ENCODE measurements at regions of chr16 and their contacts with region 1.

Region 1: GRCh38 chr16:8878521-8878911 is 3.6 kb upstream of the LITAFD start:
- DNase-seq: no peak
- H3K4me3 ChIP-seq: no peak overlapping the region
- H3K27ac ChIP-seq: no peak overlapping the region
- H3K4me1 ChIP-seq: no peaks in the 10 kb centered on the region
- H3K27me3 ChIP-seq: peaks cover 0 to 2% of the 10 kb centered on the region in 2 experiments
- CTCF ChIP-seq: no peak
- POLR2A ChIP-seq: no peak

Region 2: GRCh38 chr16:8271344-8271743 is 607.2 kb before region 1 on chr16:
- CTCF ChIA-PET with region 1: no interaction called
- POLR2A ChIA-PET with region 1: no interaction called
- dilution Hi-C with region 1: no loop called
- intact Hi-C with region 1: no loop called
- DNase-seq: no peak
- H3K4me3 ChIP-seq: no peak overlapping the region
- H3K27ac ChIP-seq: no peak overlapping the region
- H3K4me1 ChIP-seq: no peaks in the 10 kb centered on the region
- H3K27me3 ChIP-seq: no peaks in the 10 kb centered on the region
- CTCF ChIP-seq: no peak
- POLR2A ChIP-seq: no peak

Region 3: GRCh38 chr16:8572919-8573724 is 305.4 kb before region 1 on chr16:
- CTCF ChIA-PET with region 1: interaction called, 10 read pairs
- POLR2A ChIA-PET with region 1: no interaction called
- dilution Hi-C with region 1: no loop called
- intact Hi-C with region 1: no loop called
- DNase-seq: no peak
- H3K4me3 ChIP-seq: no peak overlapping the region
- H3K27ac ChIP-seq: no peak overlapping the region
- H3K4me1 ChIP-seq: no peaks in the 10 kb centered on the region
- H3K27me3 ChIP-seq: peaks cover 2 to 3% of the 10 kb centered on the region in 2 experiments
- CTCF ChIP-seq: peak; percentile 14 to 27
- POLR2A ChIP-seq: no peak

Region 4: GRCh38 chr16:8660841-8661301 is 217.6 kb before region 1 on chr16:
- CTCF ChIA-PET with region 1: interaction called, 92 read pairs
- POLR2A ChIA-PET with region 1: no interaction called
- dilution Hi-C with region 1: no loop called
- intact Hi-C with region 1: loop called (anchors 1 kb)
- DNase-seq: peak; percentile 53
- H3K4me3 ChIP-seq: no peak overlapping the region
- H3K27ac ChIP-seq: no peak overlapping the region
- H3K4me1 ChIP-seq: no peaks in the 10 kb centered on the region
- H3K27me3 ChIP-seq: peaks cover 0 to 6% of the 10 kb centered on the region in 2 experiments
- CTCF ChIP-seq: peak; percentile 65 to 75
- POLR2A ChIP-seq: no peak

Region 5: GRCh38 chr16:8674413-8675022 is 204.0 kb before region 1 on chr16 and contains the start of gene ABAT:
- CTCF ChIA-PET with region 1: interaction called, 14 read pairs
- POLR2A ChIA-PET with region 1: no interaction called
- dilution Hi-C with region 1: no loop called
- intact Hi-C with region 1: no loop called
- DNase-seq: peak; percentile 77
- H3K4me3 ChIP-seq: peak within 1 kb of the TSS; percentile 39 to 51 (median 46)
- H3K27ac ChIP-seq: no peak within 1 kb of the TSS
- H3K4me1 ChIP-seq: peaks cover 6% of the 10 kb centered on the region
- H3K27me3 ChIP-seq: peaks cover 0 to 2% of the 10 kb centered on the region in 2 experiments
- CTCF ChIP-seq: no peak
- POLR2A ChIP-seq: no peak
- total RNA-seq, gene ABAT: 1.3 and 1.6 TPM in 2 replicates

Region 6: DNA sequence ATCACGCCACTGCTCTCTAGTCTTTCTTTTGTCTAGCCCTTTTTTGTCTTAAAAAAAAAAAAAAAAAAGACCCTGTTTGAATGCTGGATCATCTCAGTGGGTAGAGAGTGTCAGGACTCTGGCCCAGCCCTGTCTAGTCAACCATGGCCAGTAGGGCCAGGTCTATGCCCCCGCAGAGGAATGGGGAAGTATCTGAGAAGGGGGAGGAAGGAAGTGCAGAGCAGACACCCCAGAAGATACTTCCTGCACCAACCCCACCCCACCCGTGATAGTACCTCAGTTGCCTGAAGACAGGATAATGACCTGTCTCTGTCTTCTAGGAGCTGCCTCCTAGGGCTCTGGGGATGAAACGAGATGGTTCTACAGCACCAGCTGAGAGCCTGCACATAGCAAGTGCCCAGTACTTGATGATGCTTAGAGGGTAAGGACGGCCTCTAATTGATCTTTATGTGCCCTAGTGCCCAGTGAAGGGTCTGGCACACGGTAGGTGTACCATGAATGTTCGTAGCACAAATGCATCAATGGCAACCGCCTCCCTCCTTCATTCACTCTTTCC is 148.7 kb before region 1 on chr16:
- CTCF ChIA-PET with region 1: no interaction called
- POLR2A ChIA-PET with region 1: no interaction called
- dilution Hi-C with region 1: no loop called
- intact Hi-C with region 1: no loop called
- DNase-seq: no peak
- H3K4me3 ChIP-seq: no peak overlapping the region
- H3K27ac ChIP-seq: no peak overlapping the region
- H3K4me1 ChIP-seq: no peaks in the 10 kb centered on the region
- H3K27me3 ChIP-seq: no peaks in the 10 kb centered on the region
- CTCF ChIP-seq: no peak
- POLR2A ChIP-seq: no peak

Region 7: DNA sequence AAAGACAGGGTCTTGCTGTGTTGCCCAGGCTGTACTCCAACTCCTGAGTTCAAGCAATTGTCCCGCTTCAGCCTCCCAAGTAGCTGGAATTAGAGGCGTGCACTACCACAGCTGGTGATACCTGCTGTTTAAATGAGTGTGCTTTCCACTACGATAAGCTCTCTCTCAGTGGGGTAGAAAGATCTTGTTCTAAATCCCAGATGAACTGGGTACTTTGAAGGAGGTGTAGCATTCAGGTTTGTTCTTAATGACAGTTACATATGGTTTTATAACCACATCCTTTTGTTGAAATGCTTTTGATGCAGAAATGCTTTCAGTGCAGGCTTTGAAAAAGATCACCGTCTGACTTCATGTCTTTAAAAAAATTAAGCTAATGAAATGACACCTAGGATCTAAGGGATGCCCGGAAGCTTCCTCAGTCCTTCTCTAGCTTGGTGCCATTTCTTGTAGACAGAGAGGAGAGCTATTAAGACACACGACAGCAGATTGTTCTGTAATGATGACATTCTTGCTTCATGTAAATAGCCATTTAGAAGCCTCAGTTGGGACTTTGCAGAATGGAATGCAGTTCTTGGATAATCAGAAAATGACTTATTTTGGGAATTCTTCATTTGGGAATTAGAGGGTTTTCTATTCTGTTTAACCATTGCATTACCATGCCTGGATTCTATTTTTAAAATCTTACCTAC is 61.4 kb before region 1 on chr16:
- CTCF ChIA-PET with region 1: interaction called, 10 read pairs
- POLR2A ChIA-PET with region 1: no interaction called
- dilution Hi-C with region 1: no loop called
- intact Hi-C with region 1: no loop called
- DNase-seq: no peak
- H3K4me3 ChIP-seq: no peak overlapping the region
- H3K27ac ChIP-seq: no peak overlapping the region
- H3K4me1 ChIP-seq: no peaks in the 10 kb centered on the region
- H3K27me3 ChIP-seq: no peaks in the 10 kb centered on the region
- CTCF ChIP-seq: no peak
- POLR2A ChIP-seq: no peak

Region 8: DNA sequence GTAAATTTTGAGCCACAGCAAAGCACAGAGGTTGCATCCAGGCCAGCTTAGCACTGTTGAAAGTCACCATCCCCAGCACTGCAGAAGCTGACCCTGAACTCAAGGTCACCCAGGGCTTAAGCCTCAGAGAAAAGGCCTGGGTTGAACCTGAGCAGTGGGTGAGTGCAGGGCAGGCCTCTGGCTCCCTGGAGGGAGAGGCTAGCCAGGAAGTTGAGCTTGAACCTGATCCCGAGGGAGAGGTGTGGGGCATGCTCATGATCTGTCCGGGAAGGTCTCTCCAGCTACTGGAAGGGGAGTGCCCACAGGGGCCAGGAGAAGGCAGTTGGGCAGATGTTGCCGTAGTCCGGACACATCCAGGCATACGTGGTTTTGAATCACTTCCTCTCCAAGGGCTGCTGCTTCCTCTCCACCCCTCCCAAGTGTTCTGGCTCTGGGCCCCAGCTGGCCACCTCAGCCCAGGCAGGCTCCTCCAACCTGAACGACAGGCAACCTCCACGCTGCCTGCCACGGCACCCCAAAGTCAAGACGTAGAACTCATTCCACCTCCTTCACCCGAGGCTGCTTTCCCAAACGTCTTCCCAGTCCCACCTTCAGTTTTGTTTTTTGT is 28.1 kb before region 1 on chr16:
- CTCF ChIA-PET with region 1: interaction called, 13 read pairs
- POLR2A ChIA-PET with region 1: interaction called, 3 read pairs
- dilution Hi-C with region 1: no loop called
- intact Hi-C with region 1: no loop called
- DNase-seq: peak; percentile 87
- H3K4me3 ChIP-seq: no peak overlapping the region
- H3K27ac ChIP-seq: peak overlapping the region; percentile 27
- H3K4me1 ChIP-seq: peaks cover 23% of the 10 kb centered on the region
- H3K27me3 ChIP-seq: no peaks in the 10 kb centered on the region
- CTCF ChIP-seq: no peak
- POLR2A ChIP-seq: peak; percentile 62